CD4-positive, alpha-beta memory T cell (primary cell): ENCODE measurements at regions of chr19 and their contacts with region 1.

Region 1: GRCh38 chr19:36214386-36215275 is at the starts of genes ZNF146 and ZNF565:
- DNase-seq: peak; percentile 96 to 98 (median 97)
- H3K4me3 ChIP-seq: peak within 1 kb of the TSS; percentile 76 to 98
- H3K4me3 Mint-ChIP-seq: no peak within 1 kb of the TSS
- H3K27ac ChIP-seq: peak within 1 kb of the TSS; percentile 96
- H3K27ac Mint-ChIP-seq: no peak within 1 kb of the TSS
- H3K4me1 ChIP-seq: peaks cover 35% of the 10 kb centered on the region
- H3K4me1 Mint-ChIP-seq: peaks cover 15 to 26% (median 17%) of the 10 kb centered on the region in 4 donors
- H3K27me3 ChIP-seq: no peaks in the 10 kb centered on the region
- H3K27me3 Mint-ChIP-seq: no peaks in the 10 kb centered on the region
- total RNA-seq, gene ZNF146: 74.9 to 75.7 TPM
- total RNA-seq, gene ZNF565: 8.4 to 10.9 TPM

Region 2: DNA sequence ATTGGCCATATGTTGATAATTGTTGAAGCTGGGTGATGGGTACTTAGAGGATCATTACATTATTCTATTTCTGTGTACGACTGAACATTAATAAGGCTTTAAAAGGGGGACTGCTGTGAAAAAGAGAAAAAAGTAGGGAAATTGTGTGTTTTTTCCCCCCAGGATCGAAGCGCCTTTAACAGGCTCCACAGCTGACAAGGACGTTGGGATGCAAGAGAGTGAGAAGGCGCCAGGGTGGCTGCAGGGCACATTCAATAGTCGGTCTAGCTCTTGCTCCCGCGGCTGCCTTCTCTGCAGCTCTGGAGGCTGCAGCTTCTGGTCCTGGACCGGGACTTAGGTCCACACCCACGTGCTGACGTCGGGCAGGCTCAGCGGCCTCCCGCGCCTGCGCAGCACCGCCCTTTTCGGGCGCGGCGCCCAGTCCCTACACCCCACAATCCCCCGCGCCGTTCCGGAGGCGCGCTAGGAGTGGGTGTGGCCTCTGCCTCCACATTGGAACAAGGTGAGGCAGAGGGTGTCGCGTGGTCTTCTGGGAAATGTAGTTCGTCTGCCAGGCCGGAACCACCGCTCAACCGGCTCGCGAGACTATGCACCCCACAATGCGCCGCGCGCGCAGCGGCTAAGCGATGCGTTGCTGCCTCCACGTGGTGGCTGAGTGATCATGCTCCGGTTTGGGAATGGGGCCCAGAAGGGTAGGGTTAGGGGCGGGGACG is 283.3 kb before region 1 on chr19:
- CTCF ChIA-PET with region 1: no interaction called
- POLR2A ChIA-PET with region 1: no interaction called
- intact Hi-C with region 1: loop called (anchors 1 kb)
- DNase-seq: peak; percentile 99 to 100 (median 100)
- H3K4me3 ChIP-seq: peak overlapping the region in 1 of 2 donors; percentile 49
- H3K4me3 Mint-ChIP-seq: peak overlapping the region; percentile 76 to 85 (median 80)
- H3K27ac ChIP-seq: peak overlapping the region; percentile 54
- H3K27ac Mint-ChIP-seq: peak overlapping the region; percentile 86 to 97 (median 95)
- H3K4me1 ChIP-seq: peaks cover 47% of the 10 kb centered on the region
- H3K4me1 Mint-ChIP-seq: peaks cover 27 to 62% (median 38%) of the 10 kb centered on the region in 4 donors
- H3K27me3 ChIP-seq: no peaks in the 10 kb centered on the region
- H3K27me3 Mint-ChIP-seq: no peaks in the 10 kb centered on the region

Region 3: GRCh38 chr19:36132489-36132891 is 82.1 kb before region 1 on chr19:
- CTCF ChIA-PET with region 1: interaction called, 7 read pairs
- POLR2A ChIA-PET with region 1: interaction called, 12 read pairs
- intact Hi-C with region 1: no loop called
- DNase-seq: peak in 2 of 5 donors; percentile 14 to 54
- H3K4me3 ChIP-seq: no peak overlapping the region
- H3K4me3 Mint-ChIP-seq: peak overlapping the region in 4 of 8 donors; percentile 40 to 59 (median 54)
- H3K27ac ChIP-seq: no peak overlapping the region
- H3K27ac Mint-ChIP-seq: peak overlapping the region; percentile 29 to 86 (median 78)
- H3K4me1 ChIP-seq: peaks cover 32% of the 10 kb centered on the region
- H3K4me1 Mint-ChIP-seq: peaks cover 15 to 50% (median 29%) of the 10 kb centered on the region in 4 donors
- H3K27me3 ChIP-seq: no peaks in the 10 kb centered on the region
- H3K27me3 Mint-ChIP-seq: no peaks in the 10 kb centered on the region

Region 4: GRCh38 chr19:36418287-36419001 is 203.8 kb after region 1 on chr19 and contains the start of gene ZFP82:
- CTCF ChIA-PET with region 1: no interaction called
- POLR2A ChIA-PET with region 1: interaction called, 5 read pairs
- intact Hi-C with region 1: loop called (anchors 2 kb)
- DNase-seq: peak; percentile 47 to 81 (median 76)
- H3K4me3 ChIP-seq: peak within 1 kb of the TSS; percentile 71 to 82
- H3K4me3 Mint-ChIP-seq: peak within 1 kb of the TSS; percentile 81 to 93 (median 92)
- H3K27ac ChIP-seq: peak within 1 kb of the TSS; percentile 73
- H3K27ac Mint-ChIP-seq: peak within 1 kb of the TSS; percentile 78 to 97 (median 96)
- H3K4me1 ChIP-seq: peaks cover 15% of the 10 kb centered on the region
- H3K4me1 Mint-ChIP-seq: peaks cover 11 to 28% (median 20%) of the 10 kb centered on the region in 4 donors
- H3K27me3 ChIP-seq: no peaks in the 10 kb centered on the region
- H3K27me3 Mint-ChIP-seq: peaks cover 9 to 19% of the 10 kb centered on the region in 2 donors
- total RNA-seq, gene ZFP82: 8.2 to 8.6 TPM

Region 5: DNA sequence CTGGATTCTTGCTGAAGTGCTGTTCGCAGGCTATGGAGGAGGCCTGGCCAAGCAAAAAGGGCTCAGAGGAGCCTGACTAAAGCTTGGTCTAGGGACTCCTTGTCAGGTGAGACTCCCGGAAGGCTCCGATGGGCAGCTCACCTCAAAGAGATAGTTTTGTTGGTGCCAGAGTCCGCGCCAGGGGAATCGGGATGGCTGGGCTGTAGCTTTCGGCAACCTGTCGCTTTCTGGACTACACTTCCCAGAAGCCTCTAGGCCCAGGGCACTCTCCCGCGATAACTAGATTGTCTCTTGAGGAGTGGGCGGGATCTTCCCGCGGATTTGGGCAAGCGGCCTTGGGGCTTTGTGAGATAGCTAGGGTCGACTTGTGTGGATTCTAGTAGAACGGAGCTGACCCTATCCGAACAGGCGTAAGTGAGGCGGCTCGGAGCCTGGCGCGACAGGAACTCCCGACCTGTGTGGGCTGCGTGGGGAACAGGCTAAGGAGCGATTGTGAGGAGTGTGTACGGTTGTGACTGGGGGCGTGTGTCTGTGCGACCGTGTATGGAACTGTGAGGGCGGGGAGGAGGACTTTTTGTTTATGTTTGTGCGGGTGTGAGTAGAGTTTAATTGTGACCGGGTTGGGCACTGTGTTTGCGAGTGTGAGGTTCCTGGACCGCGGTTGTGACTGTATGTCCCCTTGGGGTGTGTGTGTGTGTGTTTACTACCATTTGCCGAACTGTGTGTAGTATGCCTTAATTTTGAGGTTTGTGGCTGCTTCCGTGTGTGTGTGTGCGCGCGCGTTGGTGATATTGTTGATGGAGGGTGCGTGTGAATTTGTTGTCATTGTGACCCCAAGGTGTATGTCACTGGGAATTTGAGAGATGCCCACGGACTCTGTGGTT is 636.2 kb after region 1 on chr19 and contains the start of gene ZNF345:
- CTCF ChIA-PET with region 1: no interaction called
- POLR2A ChIA-PET with region 1: interaction called, 22 read pairs
- intact Hi-C with region 1: loop called (anchors 1 kb)
- DNase-seq: peak; percentile 87 to 94 (median 89)
- H3K4me3 ChIP-seq: peak within 1 kb of the TSS; percentile 88 to 97
- H3K4me3 Mint-ChIP-seq: no peak within 1 kb of the TSS
- H3K27ac ChIP-seq: peak within 1 kb of the TSS; percentile 86
- H3K27ac Mint-ChIP-seq: no peak within 1 kb of the TSS
- H3K4me1 ChIP-seq: peaks cover 29% of the 10 kb centered on the region
- H3K4me1 Mint-ChIP-seq: peaks cover 5 to 24% (median 11%) of the 10 kb centered on the region in 4 donors
- H3K27me3 ChIP-seq: no peaks in the 10 kb centered on the region
- H3K27me3 Mint-ChIP-seq: no peaks in the 10 kb centered on the region
- total RNA-seq, gene ZNF345: 17.6 to 18.0 TPM

Region 6: DNA sequence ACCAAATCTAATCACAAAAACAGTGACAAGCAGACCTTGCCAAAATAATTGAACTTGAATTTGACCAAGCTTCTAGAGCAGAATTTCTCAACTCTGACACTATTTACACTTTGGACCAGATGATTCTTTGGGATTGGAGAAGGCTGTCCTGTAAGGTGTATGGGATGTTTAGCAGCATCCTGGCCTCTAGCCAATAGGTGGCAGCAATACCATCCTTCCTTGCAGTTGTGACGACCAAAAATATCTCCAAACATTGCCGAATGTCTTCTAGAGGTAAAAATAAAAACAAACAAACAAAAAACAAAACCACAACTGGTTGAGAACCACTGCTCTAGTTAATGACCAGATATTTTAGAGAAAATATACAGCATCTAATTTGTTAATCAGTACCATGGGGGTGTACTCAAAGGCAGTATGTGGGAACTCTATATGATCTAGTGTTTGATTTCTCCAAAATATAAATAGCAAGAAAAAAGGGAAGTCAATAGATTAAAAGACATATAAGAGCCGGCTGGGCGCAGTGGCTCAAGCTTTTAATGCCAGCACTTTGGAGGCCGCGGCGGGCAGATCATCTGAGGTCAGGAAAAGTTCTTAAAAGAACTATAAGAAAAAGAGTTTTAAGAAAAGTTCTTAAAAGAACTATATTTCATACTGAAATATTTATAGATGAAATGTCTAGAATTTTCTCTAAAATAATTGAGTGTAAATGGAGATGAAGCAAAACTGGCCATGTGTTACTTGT is 1095.4 kb after region 1 on chr19:
- CTCF ChIA-PET with region 1: no interaction called
- POLR2A ChIA-PET with region 1: no interaction called
- intact Hi-C with region 1: loop called (anchors 10 kb)
- DNase-seq: peak in 3 of 5 donors; percentile 31 to 39 (median 38)
- H3K4me3 ChIP-seq: no peak overlapping the region
- H3K4me3 Mint-ChIP-seq: no peak overlapping the region
- H3K27ac ChIP-seq: no peak overlapping the region
- H3K27ac Mint-ChIP-seq: peak overlapping the region in 1 of 7 donors; percentile 10
- H3K4me1 ChIP-seq: peaks cover 5% of the 10 kb centered on the region
- H3K4me1 Mint-ChIP-seq: peaks cover 9 to 19% (median 13%) of the 10 kb centered on the region in 4 donors
- H3K27me3 ChIP-seq: no peaks in the 10 kb centered on the region
- H3K27me3 Mint-ChIP-seq: peaks cover 1 to 5% of the 10 kb centered on the region in 2 donors

Region 7: GRCh38 chr19:37506387-37507166 is 1291.9 kb after region 1 on chr19 and contains the start of gene ZNF793:
- CTCF ChIA-PET with region 1: no interaction called
- POLR2A ChIA-PET with region 1: no interaction called
- intact Hi-C with region 1: loop called (anchors 2 kb)
- DNase-seq: peak; percentile 85 to 88 (median 87)
- H3K4me3 ChIP-seq: peak within 1 kb of the TSS; percentile 57 to 78
- H3K4me3 Mint-ChIP-seq: no peak within 1 kb of the TSS
- H3K27ac ChIP-seq: peak within 1 kb of the TSS; percentile 88
- H3K27ac Mint-ChIP-seq: no peak within 1 kb of the TSS
- H3K4me1 ChIP-seq: peaks cover 17% of the 10 kb centered on the region
- H3K4me1 Mint-ChIP-seq: peaks cover 0 to 2% (median 0%) of the 10 kb centered on the region in 4 donors
- H3K27me3 ChIP-seq: no peaks in the 10 kb centered on the region
- H3K27me3 Mint-ChIP-seq: no peaks in the 10 kb centered on the region
- total RNA-seq, gene ZNF793: 10.2 to 13.8 TPM